CD8-positive, alpha-beta T cell (primary cell): ENCODE measurements at regions of chr12 and their contacts with region 1.

Region 1: DNA sequence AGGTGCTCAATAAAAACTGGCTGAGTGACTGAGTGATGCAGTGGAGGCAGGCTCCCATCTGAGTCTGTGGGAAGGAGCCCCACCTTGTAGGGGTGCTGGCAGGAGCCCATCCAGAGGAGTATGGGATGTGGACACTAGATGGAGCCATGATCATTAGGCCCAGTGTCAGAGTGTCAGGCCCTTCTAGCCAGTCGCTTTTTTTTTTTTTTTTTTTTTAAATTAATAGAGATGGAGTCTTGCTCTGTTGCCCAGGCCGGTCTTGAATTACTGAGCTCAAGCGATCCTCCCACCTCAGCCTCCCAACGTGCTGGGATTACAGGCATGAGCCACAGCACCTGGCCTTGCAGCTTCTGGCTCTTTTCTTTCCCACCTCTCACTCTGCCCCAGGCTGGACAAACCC is 11.5 kb downstream of the RITA1 start:
- DNase-seq: peak in 8 of 9 experiments; percentile 29 to 84 (median 58)
- ATAC-seq: peak; percentile 99
- H3K4me3 ChIP-seq: no peak overlapping the region
- H3K4me3 Mint-ChIP-seq: no peak overlapping the region
- H3K27ac ChIP-seq: no peak overlapping the region
- H3K27ac Mint-ChIP-seq: no peak overlapping the region
- H3K4me1 ChIP-seq: no peaks in the 10 kb centered on the region
- H3K4me1 Mint-ChIP-seq: no peaks in the 10 kb centered on the region
- H3K27me3 ChIP-seq: no peaks in the 10 kb centered on the region
- H3K27me3 Mint-ChIP-seq: no peaks in the 10 kb centered on the region
- CTCF ChIP-seq: peak; percentile 38

Region 2: DNA sequence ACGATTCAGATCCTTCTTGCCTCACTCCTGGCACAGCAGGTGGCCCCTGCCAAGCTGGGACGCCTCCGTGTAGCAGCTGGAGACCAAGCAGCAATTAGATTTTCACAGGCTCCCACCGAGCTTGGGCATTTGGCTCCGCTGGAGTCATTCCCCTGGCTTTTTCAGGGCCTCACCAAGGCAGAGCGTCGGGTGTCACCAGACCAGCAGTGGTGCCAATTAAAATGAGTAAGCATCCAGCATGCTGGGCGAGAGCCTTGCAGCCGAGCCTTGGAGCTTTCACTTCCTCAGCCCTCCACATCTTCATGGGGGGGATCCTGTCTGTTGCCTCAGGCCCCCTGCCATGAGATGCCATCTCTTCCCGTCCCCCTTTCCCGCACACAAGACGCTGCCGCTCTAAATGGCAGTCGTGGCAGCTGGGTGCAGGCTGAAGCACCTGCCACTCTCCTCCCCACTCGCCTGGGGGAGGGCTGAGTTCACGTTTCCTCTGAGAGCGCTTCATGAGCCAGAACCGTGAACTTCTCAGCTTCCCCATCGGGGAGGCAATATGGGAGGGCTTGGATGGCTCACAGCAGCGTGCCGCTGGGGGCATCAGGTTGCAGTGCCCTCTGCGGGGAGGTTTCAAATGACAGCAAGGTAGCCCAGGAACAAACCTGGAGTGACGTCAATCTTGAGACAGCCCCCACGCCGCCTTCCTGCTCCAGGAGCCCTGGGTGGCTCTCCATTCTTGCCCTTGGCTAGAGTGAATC is 36.0 kb after region 1 on chr12:
- CTCF ChIA-PET with region 1: interaction called, 4 read pairs
- POLR2A ChIA-PET with region 1: no interaction called
- intact Hi-C with region 1: loop called (anchors 1 kb)
- DNase-seq: peak; percentile 46 to 89 (median 74)
- ATAC-seq: peak; percentile 97
- H3K4me3 ChIP-seq: peak overlapping the region; percentile 31 to 34
- H3K4me3 Mint-ChIP-seq: peak overlapping the region; percentile 86
- H3K27ac ChIP-seq: peak overlapping the region; percentile 16 to 46
- H3K27ac Mint-ChIP-seq: peak overlapping the region; percentile 90
- H3K4me1 ChIP-seq: peaks cover 41% of the 10 kb centered on the region
- H3K4me1 Mint-ChIP-seq: peaks cover 42% of the 10 kb centered on the region
- H3K27me3 ChIP-seq: no peaks in the 10 kb centered on the region
- H3K27me3 Mint-ChIP-seq: no peaks in the 10 kb centered on the region
- CTCF ChIP-seq: peak; percentile 55

Region 3: DNA sequence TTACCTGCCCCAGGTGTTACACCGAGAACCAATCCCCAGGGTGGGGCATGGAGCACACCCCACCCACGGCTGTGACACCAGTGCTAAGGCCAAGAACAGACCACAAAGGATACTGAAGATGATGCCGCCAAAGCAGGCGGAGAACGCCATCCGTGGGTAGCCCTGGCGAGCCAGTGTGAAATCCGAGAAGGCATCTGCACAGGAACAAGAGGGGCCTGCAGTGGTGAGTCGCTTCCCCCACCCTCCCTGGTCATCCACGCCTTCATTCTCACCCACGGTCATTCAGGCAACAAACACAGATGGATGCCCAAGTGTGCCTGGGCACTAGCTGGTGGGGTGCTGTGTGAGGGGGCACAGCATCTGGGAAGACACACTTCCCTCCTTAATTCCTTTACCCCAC is 109.4 kb after region 1 on chr12:
- CTCF ChIA-PET with region 1: no interaction called
- POLR2A ChIA-PET with region 1: no interaction called
- intact Hi-C with region 1: no loop called
- DNase-seq: no peak
- ATAC-seq: no peak
- H3K4me3 ChIP-seq: no peak overlapping the region
- H3K4me3 Mint-ChIP-seq: no peak overlapping the region
- H3K27ac ChIP-seq: no peak overlapping the region
- H3K27ac Mint-ChIP-seq: no peak overlapping the region
- H3K4me1 ChIP-seq: peaks cover 7% of the 10 kb centered on the region
- H3K4me1 Mint-ChIP-seq: peaks cover 14% of the 10 kb centered on the region
- H3K27me3 ChIP-seq: no peaks in the 10 kb centered on the region
- H3K27me3 Mint-ChIP-seq: no peaks in the 10 kb centered on the region
- CTCF ChIP-seq: no peak

Region 4: DNA sequence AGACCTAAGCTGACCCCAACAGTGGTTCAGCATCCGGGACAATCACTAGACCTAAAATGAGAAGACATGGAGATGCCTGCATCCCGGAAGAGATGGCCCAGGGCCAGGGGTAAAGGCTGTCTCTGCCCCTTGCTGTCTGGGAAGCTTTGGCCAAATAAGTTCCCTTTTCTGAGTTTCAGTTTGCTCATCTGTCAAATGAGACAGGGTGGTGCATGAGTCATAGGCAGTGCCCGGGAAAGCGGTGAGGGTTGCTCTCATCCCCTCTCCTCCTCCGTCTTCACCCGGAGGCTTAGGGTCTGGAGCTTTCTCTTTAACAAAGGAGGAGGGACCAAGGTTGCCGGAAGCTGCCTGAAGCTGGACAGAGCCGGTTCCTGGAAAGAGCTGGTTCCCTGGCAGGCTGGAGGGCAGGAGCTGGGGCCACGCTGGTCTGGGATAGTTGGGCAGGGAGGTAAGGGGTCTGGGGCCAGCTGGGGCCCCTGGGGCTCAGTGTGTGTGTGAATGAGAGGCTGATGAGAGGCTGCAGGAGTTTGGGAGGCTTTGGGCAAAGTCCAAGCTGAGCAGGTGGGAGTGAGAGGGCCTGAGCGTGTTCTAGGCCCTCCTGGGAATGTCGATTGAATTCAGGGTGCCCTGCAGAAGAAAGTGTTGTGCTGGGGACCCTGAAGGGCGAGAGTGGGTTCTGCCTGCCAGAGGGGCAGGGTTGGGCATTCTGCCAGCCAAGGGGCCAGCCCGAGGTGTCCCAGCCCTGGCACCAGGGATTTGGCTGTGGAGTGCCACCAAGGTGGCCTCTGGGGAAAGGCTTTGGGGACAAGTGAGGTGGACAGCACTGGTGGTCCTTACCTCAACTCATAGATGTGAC is 225.3 kb after region 1 on chr12 and contains the start of gene SDSL:
- CTCF ChIA-PET with region 1: interaction called, 10 read pairs
- POLR2A ChIA-PET with region 1: no interaction called
- intact Hi-C with region 1: loop called (anchors 2 kb)
- DNase-seq: peak in 1 of 9 experiments; percentile 38
- ATAC-seq: no peak
- H3K4me3 ChIP-seq: no peak within 1 kb of the TSS
- H3K4me3 Mint-ChIP-seq: no peak within 1 kb of the TSS
- H3K27ac ChIP-seq: no peak within 1 kb of the TSS
- H3K27ac Mint-ChIP-seq: no peak within 1 kb of the TSS
- H3K4me1 ChIP-seq: no peaks in the 10 kb centered on the region
- H3K4me1 Mint-ChIP-seq: no peaks in the 10 kb centered on the region
- H3K27me3 ChIP-seq: no peaks in the 10 kb centered on the region
- H3K27me3 Mint-ChIP-seq: peaks cover 8% of the 10 kb centered on the region
- CTCF ChIP-seq: no peak
- total RNA-seq, gene SDSL: not detected

Region 5: GRCh38 chr12:113647048-113647447 is 450.1 kb after region 1 on chr12:
- CTCF ChIA-PET with region 1: no interaction called
- POLR2A ChIA-PET with region 1: no interaction called
- intact Hi-C with region 1: no loop called
- DNase-seq: no peak
- ATAC-seq: no peak
- H3K4me3 ChIP-seq: no peak overlapping the region
- H3K4me3 Mint-ChIP-seq: no peak overlapping the region
- H3K27ac ChIP-seq: no peak overlapping the region
- H3K27ac Mint-ChIP-seq: no peak overlapping the region
- H3K4me1 ChIP-seq: no peaks in the 10 kb centered on the region
- H3K4me1 Mint-ChIP-seq: no peaks in the 10 kb centered on the region
- H3K27me3 ChIP-seq: peaks cover 0 to 2% of the 10 kb centered on the region in 2 experiments
- H3K27me3 Mint-ChIP-seq: peaks cover 68% of the 10 kb centered on the region
- CTCF ChIP-seq: no peak

Region 6: GRCh38 chr12:113912760-113913329 is 715.8 kb after region 1 on chr12:
- CTCF ChIA-PET with region 1: no interaction called
- POLR2A ChIA-PET with region 1: no interaction called
- intact Hi-C with region 1: loop called in 1 of 2 experiments (anchors 5 kb)
- DNase-seq: peak in 8 of 9 experiments; percentile 14 to 60 (median 48)
- ATAC-seq: peak; percentile 31
- H3K4me3 ChIP-seq: no peak overlapping the region
- H3K4me3 Mint-ChIP-seq: no peak overlapping the region
- H3K27ac ChIP-seq: no peak overlapping the region
- H3K27ac Mint-ChIP-seq: no peak overlapping the region
- H3K4me1 ChIP-seq: no peaks in the 10 kb centered on the region
- H3K4me1 Mint-ChIP-seq: no peaks in the 10 kb centered on the region
- H3K27me3 ChIP-seq: no peaks in the 10 kb centered on the region
- H3K27me3 Mint-ChIP-seq: no peaks in the 10 kb centered on the region
- CTCF ChIP-seq: peak; percentile 69